ENCODE measurements at regions of chr13 and their contacts with region 1.

Region 1: GRCh38 chr13:80168089-80168850 is 172.7 kb downstream of the SPRY2 start:
- DNase-seq: no peak
- ATAC-seq: peak; percentile 19
- H3K4me3 ChIP-seq: no peak overlapping the region
- H3K27ac ChIP-seq: no peak overlapping the region
- H3K4me1 ChIP-seq: no peaks in the 10 kb centered on the region
- H3K27me3 ChIP-seq: no peaks in the 10 kb centered on the region
- CTCF ChIP-seq: no peak
- EP300 ChIP-seq: no peak
- POLR2A ChIP-seq: no peak
- RAD21 ChIP-seq: no peak

Region 2: GRCh38 chr13:80157261-80157932 is 10.9 kb before region 1 on chr13:
- CTCF ChIA-PET with region 1: interaction called, 7 read pairs
- POLR2A ChIA-PET with region 1: no interaction called
- RAD21 ChIA-PET with region 1: no interaction called
- SMC1A ChIA-PET with region 1: interaction called, 12 read pairs
- in situ Hi-C with region 1: no loop called
- intact Hi-C with region 1: no loop called
- DNase-seq: no peak
- ATAC-seq: no peak
- H3K4me3 ChIP-seq: no peak overlapping the region
- H3K27ac ChIP-seq: no peak overlapping the region
- H3K4me1 ChIP-seq: no peaks in the 10 kb centered on the region
- H3K27me3 ChIP-seq: no peaks in the 10 kb centered on the region
- CTCF ChIP-seq: no peak
- EP300 ChIP-seq: no peak
- POLR2A ChIP-seq: no peak
- RAD21 ChIP-seq: no peak

Measured in GM12878 (cell line).